ENCODE measurements at regions of chr15 and their contacts with region 1.

Region 1: DNA sequence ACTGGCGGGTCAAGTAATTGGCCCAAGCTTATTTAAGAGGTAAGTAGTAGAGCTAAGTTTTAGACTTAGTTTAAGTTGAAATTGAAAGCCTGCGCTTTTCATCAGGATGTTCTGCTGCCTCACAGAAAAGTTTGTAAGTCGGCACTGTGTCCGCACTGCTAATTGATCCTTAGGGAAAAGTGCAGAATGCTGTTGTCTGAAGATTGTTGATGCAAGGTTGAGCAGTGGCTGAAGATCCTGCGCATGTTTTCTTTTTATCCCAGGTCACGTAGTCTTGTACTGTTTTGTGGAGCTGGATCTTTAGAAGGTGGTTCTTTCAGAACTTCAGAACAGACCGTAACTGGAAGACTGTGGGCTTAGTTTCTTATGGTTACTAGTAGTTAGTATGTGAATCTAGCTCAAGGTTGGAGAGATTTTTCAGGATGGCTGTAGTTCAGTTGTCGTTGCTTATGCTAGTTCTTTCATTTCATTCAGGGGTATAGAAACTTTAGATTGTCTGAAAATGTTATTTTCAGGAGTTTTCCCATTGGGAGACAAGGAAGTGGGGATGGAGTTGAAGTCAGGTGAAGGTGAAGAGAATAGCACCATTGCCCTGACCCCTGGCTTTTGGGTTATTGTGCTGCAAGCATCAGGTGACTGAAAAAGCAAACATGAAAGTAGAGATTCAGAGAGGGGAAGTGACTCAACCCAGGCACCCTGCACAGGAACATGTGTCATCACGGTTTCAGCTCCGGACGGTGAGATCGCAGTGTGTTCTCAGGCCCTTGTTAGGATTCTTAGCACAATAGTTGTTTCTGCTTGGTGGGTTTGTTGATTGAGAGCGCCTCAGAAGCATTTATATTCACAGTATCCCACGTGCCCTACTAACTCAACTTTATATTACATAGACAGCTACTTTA is 32.8 kb downstream of the AKAP13 start:
- DNase-seq: peak; percentile 83

Region 2: DNA sequence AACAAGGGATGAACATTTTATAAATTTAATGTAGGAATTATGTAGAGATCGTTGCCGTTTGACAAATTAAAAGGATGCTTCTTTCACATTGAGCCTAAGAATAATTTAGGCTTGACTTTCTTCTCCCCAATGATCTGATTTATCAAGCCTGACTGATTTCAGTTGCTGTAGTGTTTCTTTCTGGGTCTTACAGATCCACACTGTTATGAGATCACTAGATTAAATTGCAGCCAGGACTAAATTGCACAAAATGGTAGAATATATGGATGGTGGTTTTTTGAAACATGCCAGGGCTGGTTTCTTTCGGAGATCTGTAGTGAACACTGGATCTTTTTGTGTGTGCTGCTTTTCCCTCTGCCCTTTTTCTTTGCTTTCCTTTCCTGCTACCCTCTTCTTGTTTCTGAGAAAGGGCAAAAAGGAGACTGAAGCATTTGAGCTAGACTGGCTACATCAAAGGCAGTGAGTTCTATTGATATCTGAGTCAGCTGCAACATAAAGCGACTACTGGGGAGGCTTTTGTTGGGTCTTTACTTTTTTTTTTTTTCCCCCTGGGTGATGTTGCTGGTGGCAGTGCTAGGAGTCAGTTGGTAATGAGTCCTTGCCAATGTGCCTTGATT is 50.2 kb after region 1 on chr15:
- intact Hi-C with region 1: loop called in 1 of 2 experiments (anchors 5 kb)
- DNase-seq: no peak

Region 3: DNA sequence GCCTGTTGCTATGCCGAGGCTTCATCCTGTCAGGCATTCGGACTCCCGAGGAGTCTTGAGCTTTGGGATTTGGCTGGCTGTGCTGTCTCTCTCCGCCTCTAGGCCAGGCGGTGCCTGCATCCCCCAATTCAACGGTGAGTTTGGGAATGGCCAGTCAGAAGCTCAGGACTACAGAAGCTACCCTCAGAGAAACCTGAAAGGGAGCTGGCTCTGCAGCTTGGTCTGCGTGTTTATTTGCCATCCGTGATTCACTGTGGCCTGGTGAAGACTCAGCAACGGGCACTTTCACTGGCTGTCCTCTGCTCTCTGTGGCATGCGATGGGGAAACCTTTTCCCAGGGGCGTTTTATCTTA is 484.7 kb after region 1 on chr15:
- intact Hi-C with region 1: no loop called
- DNase-seq: no peak

Measured in posterior vena cava (tissue), 2 donors.